Right ventricle myocardium inferior (tissue), 1 donor: ENCODE measurements at regions of chr7 and their contacts with region 1.

Region 1: DNA sequence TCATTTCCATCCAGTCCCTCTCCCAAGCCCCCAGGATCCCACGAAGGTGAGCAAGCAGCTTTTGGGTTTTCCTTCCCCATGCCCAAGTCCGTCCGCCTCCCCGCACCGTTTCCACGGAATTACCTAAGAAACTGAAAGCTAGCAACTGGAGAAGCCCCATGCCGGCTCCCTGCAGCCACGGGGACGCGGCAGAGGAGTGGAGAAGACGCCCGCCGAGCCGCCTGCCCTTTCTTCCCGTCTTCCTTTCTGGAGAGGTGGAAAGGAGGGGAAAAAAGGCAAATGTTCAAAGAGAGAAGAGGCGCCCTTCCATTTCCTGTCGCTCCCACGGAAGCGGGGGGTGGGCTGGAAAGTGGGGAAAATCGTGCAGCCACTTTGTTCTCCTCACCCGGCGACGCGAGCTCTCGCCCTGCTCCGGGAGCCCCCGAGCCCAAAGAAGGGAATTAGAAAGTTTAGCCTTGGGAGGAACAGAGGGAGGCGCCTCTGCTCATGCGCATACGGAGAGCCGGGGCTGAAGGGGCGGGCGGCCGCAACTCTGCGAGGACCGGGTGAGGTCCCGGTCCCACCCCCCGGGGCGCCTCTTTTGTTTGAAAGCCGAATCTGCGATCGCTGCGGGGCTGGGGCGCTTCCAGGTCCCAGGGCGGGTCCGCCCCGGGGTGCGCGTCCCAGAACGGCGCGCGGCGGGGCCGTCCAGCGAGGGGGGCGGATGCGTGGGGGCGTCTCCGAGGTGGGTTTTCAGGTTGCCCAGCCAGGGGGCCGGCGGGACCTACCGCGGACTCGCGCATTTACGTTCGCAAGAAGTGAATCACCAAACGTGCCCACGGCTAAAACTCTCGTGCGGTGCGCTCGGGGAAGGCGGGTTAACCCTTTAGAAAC is at the start of gene LAMB1:
- DNase-seq: peak; percentile 93
- ATAC-seq: peak; percentile 85
- total RNA-seq, gene LAMB1: 83.2 TPM

Region 2: GRCh38 chr7:107966711-107967110 is 36.3 kb before region 1 on chr7:
- intact Hi-C with region 1: loop called (anchors 5 kb)
- DNase-seq: no peak
- ATAC-seq: peak; percentile 82

Region 3: DNA sequence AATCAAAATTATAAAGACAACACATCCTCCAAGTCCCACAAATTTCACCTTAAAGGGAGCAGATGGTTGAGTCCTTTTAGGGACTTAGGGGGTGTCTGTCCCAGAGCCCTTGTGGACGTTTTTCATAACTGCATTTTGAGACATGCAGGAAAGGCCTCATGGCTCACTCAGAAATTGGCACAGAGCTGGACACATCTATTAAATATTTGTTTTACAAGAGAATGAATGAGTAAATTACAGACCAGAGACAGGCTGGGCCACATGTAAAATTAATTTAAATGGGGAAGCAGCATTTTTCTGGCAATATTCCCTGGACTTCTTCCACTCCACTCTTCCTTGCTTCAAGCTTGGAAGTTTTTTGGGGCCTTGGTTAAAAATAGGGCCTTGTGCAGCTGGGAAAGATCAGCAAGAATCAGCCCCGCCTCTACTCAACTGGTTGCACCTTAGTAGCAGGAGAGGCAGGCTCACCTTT is 20.0 kb before region 1 on chr7:
- intact Hi-C with region 1: no loop called
- DNase-seq: no peak
- ATAC-seq: peak; percentile 20

Region 4: GRCh38 chr7:108094933-108095710 is 92.2 kb after region 1 on chr7:
- intact Hi-C with region 1: loop called (anchors 5 kb)
- DNase-seq: no peak
- ATAC-seq: peak; percentile 57